HEK293 (cell line): ENCODE measurements at regions of chr9 and their contacts with region 1.

Region 1: GRCh38 chr9:133149126-133150107 is 14.3 kb downstream of the GBGT1 start:
- H3K4me3 ChIP-seq: peak overlapping the region; percentile 64
- H3K27ac ChIP-seq: peak overlapping the region; percentile 89
- H3K4me1 ChIP-seq: 0 out of 2 replicates have a peak, but pooled peaks cover 3% of the 10 kb centered on the region
- CTCF ChIP-seq: peak; percentile 96

Region 2: DNA sequence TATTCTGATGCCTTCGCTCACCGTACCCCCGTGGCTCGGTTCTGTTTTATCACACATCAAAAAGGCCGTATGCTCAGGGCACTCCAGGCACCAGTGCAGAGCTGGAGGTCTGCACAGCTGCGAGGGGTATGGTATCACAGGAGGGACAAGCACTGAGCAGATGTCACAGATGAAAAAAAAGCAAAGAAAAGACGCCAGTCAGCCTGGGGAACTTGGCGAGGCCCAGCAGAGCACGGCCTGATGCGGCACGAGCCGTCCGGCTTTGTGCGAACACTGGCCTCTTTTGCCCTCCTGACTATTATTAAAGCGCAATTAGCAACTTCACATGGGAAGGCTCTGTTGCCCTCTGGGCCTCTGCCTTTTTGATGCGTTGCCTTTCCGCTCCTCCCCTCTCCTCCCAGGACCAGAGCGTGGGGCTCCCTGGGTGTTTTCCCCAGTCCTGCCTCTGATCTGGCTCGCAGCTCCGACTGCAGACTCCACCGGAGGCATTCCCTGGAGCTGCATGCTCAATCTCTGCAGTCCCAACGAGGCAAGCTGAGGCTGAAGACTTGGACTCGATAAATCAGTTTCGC is 315.8 kb before region 1 on chr9:
- CTCF ChIA-PET with region 1: no interaction called
- POLR2A ChIA-PET with region 1: no interaction called
- H3K4me3 ChIP-seq: no peak overlapping the region
- H3K27ac ChIP-seq: no peak overlapping the region
- H3K4me1 ChIP-seq: no peaks in the 10 kb centered on the region
- CTCF ChIP-seq: no peak

Region 3: DNA sequence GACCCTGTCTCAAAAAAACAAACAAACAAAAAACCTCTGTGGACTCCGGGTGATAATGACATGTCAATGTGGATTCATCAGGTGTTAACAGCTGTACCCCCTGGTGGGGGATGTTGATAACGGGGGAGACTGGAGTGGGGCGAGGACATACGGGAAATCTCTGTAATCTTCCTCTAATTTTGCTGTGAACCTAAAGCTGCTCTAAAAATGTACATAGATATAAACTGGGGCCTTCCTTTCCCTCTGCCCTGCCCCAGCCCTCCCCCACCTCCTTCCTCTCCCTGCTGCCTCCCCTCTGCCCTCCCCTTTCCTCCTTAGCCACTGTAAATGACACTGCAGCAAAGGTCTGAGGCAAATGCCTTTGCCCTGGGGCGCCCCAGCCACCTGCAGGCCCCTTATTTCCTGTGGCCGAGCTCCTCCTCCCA is 89.0 kb before region 1 on chr9:
- CTCF ChIA-PET with region 1: interaction called, 11 read pairs
- POLR2A ChIA-PET with region 1: no interaction called
- H3K4me3 ChIP-seq: no peak overlapping the region
- H3K27ac ChIP-seq: no peak overlapping the region
- H3K4me1 ChIP-seq: peaks cover 6% of the 10 kb centered on the region; the same call in 1 of the 2 replicates
- CTCF ChIP-seq: no peak

Region 4: GRCh38 chr9:133103183-133103986 is 46.0 kb before region 1 on chr9:
- CTCF ChIA-PET with region 1: interaction called, 342 read pairs
- POLR2A ChIA-PET with region 1: interaction called, 4 read pairs
- H3K4me3 ChIP-seq: no peak overlapping the region
- H3K27ac ChIP-seq: no peak overlapping the region
- H3K4me1 ChIP-seq: no peaks in the 10 kb centered on the region
- CTCF ChIP-seq: peak; percentile 89

Region 5: GRCh38 chr9:133133681-133134418 is 15.6 kb before region 1 on chr9:
- CTCF ChIA-PET with region 1: interaction called, 131 read pairs
- POLR2A ChIA-PET with region 1: interaction called, 7 read pairs
- H3K4me3 ChIP-seq: no peak overlapping the region
- H3K27ac ChIP-seq: no peak overlapping the region
- H3K4me1 ChIP-seq: no peaks in the 10 kb centered on the region
- CTCF ChIP-seq: no peak

Region 6: DNA sequence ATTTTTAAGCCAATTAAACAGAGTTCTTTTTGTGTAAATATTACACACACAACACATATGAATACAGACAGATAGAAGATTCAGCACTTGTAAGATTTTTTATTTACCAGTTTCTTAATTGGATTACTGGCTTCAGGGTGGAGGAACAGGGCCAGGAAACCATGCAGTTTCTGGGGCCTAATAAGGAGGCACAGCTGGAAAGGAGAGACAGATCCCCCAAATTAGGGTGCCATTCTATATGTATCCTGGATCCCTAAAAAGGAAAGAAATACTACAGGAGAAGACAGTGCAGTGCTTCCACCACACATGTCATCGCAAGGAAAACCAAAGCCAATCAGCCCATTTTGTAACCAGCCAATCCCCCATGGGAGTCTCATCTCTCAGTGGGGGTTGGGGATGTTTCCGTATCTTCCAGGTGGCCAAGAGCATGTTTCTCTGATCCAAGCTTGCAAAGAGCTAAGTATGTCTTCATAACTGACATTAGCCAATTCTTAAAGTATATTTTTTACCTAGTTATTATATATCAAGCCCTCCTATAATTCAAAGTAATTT is 141.4 kb after region 1 on chr9:
- CTCF ChIA-PET with region 1: no interaction called
- POLR2A ChIA-PET with region 1: no interaction called
- H3K4me3 ChIP-seq: no peak overlapping the region
- H3K27ac ChIP-seq: no peak overlapping the region
- H3K4me1 ChIP-seq: no peaks in the 10 kb centered on the region
- CTCF ChIP-seq: no peak